Esophagus muscularis mucosa (tissue), 4 donors: ENCODE measurements at regions of chr17 and their contacts with region 1.

Region 1: GRCh38 chr17:79600681-79601131 is 10.1 kb downstream of the RBFOX3 start:
- DNase-seq: no peak
- H3K4me3 ChIP-seq: no peak overlapping the region
- H3K27ac ChIP-seq: no peak overlapping the region
- H3K4me1 ChIP-seq: peaks cover 0 to 9% (median 2%) of the 10 kb centered on the region in 4 donors
- H3K27me3 ChIP-seq: peaks cover 0 to 87% (median 2%) of the 10 kb centered on the region in 4 donors
- CTCF ChIP-seq: no peak
- EP300 ChIP-seq: no peak
- POLR2A ChIP-seq: no peak

Region 2: DNA sequence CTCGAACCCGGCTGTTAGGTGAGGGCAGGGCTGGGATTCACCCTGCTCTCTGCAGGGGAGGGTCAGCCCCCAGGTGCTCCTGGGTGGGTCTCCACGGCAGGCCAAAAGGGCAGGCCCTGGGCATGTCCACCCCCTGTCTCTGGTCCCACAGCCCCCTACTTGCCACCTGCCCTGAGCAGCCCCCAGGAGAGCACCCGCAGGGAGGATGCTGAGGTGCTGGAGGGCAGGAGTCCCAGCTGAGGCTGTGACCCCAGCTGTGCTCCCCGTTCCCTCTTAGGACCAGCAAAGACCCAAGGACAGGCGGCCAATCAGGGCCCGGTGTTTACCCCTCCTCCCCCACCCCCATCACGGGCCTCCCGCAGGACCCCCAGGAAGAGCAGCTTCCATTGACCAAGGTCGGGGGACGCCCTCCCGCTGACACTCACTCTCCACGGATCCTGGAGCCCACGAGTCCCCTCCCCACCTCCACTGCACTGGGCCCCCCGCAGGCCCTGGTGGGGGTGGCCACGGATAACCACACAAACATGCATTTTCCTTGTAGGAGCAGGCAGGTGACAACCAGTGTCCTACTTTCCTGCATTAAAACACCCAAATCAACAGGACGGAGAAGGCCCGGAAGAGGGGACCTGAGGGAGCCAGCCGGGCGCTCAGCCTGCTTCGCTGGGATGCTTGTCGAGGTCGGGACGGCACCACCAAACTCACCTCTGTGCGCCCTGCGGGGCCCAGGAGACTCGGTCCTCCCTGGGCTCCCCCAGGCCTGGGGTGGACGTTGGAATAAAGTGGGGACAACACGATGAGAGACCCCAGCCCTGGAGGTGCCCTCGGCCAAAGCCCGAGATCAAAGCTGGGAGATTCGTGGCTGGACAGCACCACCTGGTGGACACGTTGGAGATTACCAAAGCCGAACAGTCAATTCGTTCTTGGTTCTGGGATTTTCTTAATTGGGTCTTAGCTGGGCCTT is 107.5 kb after region 1 on chr17:
- intact Hi-C with region 1: loop called (anchors 5 kb)
- DNase-seq: no peak
- H3K4me3 ChIP-seq: peak overlapping the region; percentile 30 to 47 (median 35)
- H3K27ac ChIP-seq: no peak overlapping the region
- H3K4me1 ChIP-seq: peaks cover 0 to 23% (median 13%) of the 10 kb centered on the region in 4 donors
- H3K27me3 ChIP-seq: peaks cover 0 to 46% (median 0%) of the 10 kb centered on the region in 4 donors
- CTCF ChIP-seq: peak; percentile 68 to 84 (median 72)
- EP300 ChIP-seq: no peak
- POLR2A ChIP-seq: no peak

Region 3: GRCh38 chr17:80263253-80264204 is 662.8 kb after region 1 on chr17:
- intact Hi-C with region 1: no loop called
- DNase-seq: peak; percentile 94
- H3K4me3 ChIP-seq: peak overlapping the region; percentile 36 to 59 (median 48)
- H3K27ac ChIP-seq: peak overlapping the region; percentile 96 to 99 (median 98)
- H3K4me1 ChIP-seq: peaks cover 36 to 54% (median 45%) of the 10 kb centered on the region in 4 donors
- H3K27me3 ChIP-seq: no peaks in the 10 kb centered on the region
- CTCF ChIP-seq: peak in 2 of 3 experiments; percentile 19 to 27
- EP300 ChIP-seq: no peak
- POLR2A ChIP-seq: no peak